Psoas muscle (tissue), 8 donors: ENCODE measurements at regions of chr4 and their contacts with region 1.

Region 1: GRCh38 chr4:145739840-145740239 is 59.9 kb downstream of the C4orf51 start:
- DNase-seq: no peak
- ATAC-seq: no peak
- H3K4me3 ChIP-seq: no peak overlapping the region
- H3K27ac ChIP-seq: no peak overlapping the region
- H3K4me1 ChIP-seq: peaks cover 23% of the 10 kb centered on the region
- H3K27me3 ChIP-seq: no peaks in the 10 kb centered on the region
- CTCF ChIP-seq: no peak

Region 2: GRCh38 chr4:145781351-145781750 is 41.5 kb after region 1 on chr4:
- intact Hi-C with region 1: loop called in 1 of 2 experiments (anchors 5 kb)
- DNase-seq: no peak
- ATAC-seq: no peak
- H3K4me3 ChIP-seq: no peak overlapping the region
- H3K27ac ChIP-seq: no peak overlapping the region
- H3K4me1 ChIP-seq: peaks cover 10% of the 10 kb centered on the region
- H3K27me3 ChIP-seq: no peaks in the 10 kb centered on the region
- CTCF ChIP-seq: no peak

Region 3: GRCh38 chr4:145791988-145792387 is 52.1 kb after region 1 on chr4:
- intact Hi-C with region 1: loop called in 1 of 2 experiments (anchors 5 kb)
- DNase-seq: no peak
- ATAC-seq: peak; percentile 53 to 95 (median 86)
- H3K4me3 ChIP-seq: no peak overlapping the region
- H3K27ac ChIP-seq: peak overlapping the region; percentile 80
- H3K4me1 ChIP-seq: peaks cover 25% of the 10 kb centered on the region
- H3K27me3 ChIP-seq: no peaks in the 10 kb centered on the region
- CTCF ChIP-seq: no peak